AG04449 (cell line): ENCODE measurements at regions of chr9 and their contacts with region 1.

Region 1: DNA sequence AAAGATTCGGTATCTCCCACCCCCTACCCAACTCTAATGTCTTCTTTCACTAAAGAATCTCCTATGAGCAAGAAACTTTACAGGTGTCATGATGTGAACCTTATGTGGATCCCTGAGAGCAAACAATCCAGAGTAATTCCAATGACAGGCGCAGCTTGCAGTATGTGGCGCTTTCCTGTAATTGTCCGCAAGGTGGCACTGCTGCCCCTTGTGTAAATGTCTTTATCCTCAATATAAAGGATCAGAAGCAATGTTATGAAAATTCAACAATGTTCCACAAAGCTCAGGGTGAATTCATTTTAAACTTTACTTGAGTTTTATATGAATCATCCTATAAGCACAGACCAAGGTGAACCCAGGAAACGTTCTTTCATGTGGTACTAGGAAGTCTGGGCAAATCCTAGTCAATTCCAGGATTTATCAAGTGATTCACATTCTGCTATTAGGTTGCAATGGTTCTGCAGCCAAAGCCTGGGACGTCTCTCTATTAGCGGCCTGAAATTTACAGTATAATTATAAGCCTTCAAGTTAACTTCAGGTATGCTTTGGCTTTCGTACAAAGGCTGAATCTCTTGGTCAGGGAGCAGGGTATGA is 113.7 kb downstream of the TRPM6 start:
- DNase-seq: peak; percentile 21
- H3K4me3 ChIP-seq: no peak overlapping the region
- CTCF ChIP-seq: peak; percentile 70

Region 2: DNA sequence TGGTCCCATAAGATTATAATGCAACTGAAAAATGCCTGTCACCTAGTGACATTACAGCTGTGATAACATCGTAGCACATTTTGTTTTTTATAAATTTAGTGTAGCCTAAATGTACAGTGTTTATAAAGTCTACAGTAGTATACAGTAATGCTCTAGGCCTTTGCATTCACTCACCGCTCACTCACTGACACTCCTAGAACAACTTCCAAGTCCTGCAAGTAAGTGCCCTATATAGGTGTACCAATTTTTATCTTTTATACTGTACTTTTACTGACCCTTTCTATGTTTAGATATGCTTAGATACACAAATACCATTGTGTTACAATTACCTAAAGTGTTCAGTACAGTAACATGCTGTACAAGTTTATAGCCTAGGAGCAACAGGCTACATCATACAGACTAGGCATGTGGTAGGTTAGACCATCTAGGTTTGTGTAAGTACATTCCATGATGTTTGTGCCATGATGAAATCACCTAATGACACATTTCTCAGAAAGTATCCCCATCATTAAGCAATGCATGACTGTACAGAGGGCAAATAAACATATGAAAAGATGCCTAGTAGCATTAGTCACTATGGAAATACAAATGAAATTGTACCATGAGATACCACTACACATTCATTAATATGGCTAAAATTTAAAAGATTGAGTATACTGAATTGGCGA is 13.8 kb before region 1 on chr9:
- CTCF ChIA-PET with region 1: interaction called, 24 read pairs
- POLR2A ChIA-PET with region 1: no interaction called
- DNase-seq: peak; percentile 90
- H3K4me3 ChIP-seq: no peak overlapping the region
- CTCF ChIP-seq: no peak

Region 3: DNA sequence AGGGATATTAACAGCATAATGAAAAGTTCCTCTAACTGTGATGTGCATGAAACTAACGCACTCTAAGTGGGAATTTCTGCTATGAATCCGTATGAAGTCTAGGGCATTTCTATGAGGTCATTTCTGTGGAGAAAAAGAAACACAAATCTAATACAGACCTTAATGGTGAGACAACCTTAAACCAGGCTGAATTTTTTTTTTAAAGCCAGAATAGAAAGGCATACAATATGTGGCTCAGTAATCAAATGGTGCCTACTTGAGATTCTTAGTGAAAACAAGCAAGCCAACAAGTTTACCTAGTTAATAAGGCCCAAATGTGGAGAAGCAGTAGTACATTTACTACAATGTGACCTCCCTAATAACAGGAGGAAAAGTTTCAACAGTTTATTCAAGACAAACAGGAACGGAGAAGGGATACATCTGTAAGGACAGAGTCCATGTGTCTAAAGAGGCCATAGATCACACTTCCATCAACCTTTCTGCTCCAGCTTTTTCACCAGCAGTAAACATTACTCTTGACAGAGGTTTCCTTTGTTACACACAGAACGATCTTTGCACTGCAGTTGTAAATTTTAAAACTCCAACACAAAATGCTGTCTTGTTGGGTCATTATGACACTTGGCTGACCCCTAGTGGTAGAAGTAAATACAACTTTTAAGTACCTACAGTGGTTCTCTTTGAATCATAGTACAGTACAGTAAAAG is 227.9 kb after region 1 on chr9:
- CTCF ChIA-PET with region 1: interaction called, 387 read pairs
- POLR2A ChIA-PET with region 1: no interaction called
- DNase-seq: peak; percentile 60
- H3K4me3 ChIP-seq: no peak overlapping the region
- CTCF ChIP-seq: peak; percentile 54

Region 4: GRCh38 chr9:75027187-75028107 is 253.5 kb after region 1 on chr9:
- CTCF ChIA-PET with region 1: interaction called, 51 read pairs
- POLR2A ChIA-PET with region 1: no interaction called
- DNase-seq: no peak
- H3K4me3 ChIP-seq: peak overlapping the region; percentile 74
- CTCF ChIP-seq: peak; percentile 3

Region 5: GRCh38 chr9:75083188-75083970 is 309.4 kb after region 1 on chr9:
- CTCF ChIA-PET with region 1: interaction called, 77 read pairs
- POLR2A ChIA-PET with region 1: no interaction called
- DNase-seq: no peak
- H3K4me3 ChIP-seq: no peak overlapping the region
- CTCF ChIP-seq: no peak

Region 6: DNA sequence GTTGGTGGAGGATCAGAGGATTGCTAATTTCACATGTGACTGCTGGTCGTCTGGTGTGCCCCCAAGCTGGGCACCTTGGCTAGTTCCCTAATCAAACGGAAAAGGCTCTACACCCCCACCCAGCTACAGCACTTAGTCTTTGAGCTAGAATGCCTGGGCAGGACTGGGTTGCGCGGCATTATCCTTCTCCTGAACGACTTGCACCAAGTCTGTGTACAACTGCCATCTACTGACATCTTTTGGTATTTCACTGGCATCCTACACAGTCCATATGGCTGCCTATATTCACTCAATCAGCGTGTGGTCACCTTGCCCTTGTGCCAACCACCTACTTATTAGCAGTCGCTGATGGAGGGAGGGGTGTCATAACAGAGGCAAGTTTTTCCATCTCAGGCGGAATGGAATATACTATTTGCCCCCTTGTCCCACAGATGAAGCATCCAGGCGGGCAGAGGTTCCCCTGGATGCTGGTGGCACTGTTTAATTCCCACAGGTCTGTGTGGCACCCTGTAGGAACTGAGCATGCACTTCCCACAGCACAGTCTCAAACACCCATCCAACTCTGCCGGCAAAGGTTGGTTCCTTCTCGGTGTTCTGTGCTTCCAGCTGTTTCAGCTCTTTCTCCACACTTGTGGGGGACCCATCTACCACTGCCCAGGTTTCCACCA is 464.5 kb after region 1 on chr9:
- CTCF ChIA-PET with region 1: interaction called, 31 read pairs
- POLR2A ChIA-PET with region 1: no interaction called
- DNase-seq: peak; percentile 28
- H3K4me3 ChIP-seq: no peak overlapping the region
- CTCF ChIP-seq: peak; percentile 48